Activated CD4-positive, alpha-beta T cell treated with anti-CD3 and anti-CD28 coated beads for 36 hours (primary cell): ENCODE measurements at regions of chr19 and their contacts with region 1.

Region 1: DNA sequence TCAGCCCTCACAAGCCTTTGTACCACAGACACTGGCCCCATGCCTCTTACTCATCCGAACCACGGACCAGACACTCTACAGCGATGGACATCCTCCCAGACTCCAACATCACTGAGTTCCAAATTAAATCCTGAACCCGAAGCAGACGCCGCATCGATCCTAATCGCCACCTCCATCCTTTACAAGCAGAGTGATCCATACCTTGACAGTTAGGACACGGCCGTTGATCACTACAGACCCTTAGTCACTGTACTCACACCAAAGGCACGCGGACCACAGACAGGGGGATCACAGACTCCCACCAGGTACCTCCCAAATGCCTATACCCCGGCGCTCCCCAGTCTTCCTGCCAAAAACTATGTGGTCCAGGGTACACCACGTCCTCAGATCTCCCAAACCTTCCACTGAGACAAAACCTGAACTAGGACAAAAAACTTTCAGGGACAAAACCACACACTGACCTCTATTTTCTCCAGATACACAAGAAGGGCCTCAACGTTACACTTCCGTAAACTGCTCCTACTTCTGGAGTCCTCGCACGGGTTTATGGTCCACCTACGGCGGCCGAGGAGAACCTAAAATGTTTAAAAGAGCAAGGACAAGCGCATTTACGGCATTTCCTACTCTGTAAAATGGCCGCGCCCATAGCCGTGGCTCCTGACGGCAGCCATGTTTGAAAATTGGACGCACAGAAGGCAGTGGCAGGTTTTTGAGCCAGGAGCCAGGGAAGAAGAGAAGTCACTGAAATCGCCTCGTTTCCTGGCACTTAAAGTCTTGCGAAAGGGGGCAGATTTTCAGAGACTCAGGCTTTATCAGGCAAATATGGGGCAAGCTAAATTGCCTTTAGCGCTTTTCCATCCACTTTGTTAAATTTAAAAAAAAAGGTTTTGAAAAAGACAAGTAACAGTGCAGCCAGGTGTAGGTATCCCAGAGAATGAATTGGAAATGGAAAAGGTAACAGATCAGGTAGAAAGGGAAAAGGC is at the start of gene ZNF350:
- DNase-seq: peak; percentile 94
- ATAC-seq: peak; percentile 99
- H3K4me3 Mint-ChIP-seq: peak within 1 kb of the TSS; percentile 85
- H3K27ac Mint-ChIP-seq: peak within 1 kb of the TSS; percentile 95
- H3K4me1 Mint-ChIP-seq: peaks cover 8% of the 10 kb centered on the region
- H3K27me3 Mint-ChIP-seq: no peaks in the 10 kb centered on the region
- total RNA-seq, gene ZNF350: 7.1 to 7.9 TPM

Region 2: DNA sequence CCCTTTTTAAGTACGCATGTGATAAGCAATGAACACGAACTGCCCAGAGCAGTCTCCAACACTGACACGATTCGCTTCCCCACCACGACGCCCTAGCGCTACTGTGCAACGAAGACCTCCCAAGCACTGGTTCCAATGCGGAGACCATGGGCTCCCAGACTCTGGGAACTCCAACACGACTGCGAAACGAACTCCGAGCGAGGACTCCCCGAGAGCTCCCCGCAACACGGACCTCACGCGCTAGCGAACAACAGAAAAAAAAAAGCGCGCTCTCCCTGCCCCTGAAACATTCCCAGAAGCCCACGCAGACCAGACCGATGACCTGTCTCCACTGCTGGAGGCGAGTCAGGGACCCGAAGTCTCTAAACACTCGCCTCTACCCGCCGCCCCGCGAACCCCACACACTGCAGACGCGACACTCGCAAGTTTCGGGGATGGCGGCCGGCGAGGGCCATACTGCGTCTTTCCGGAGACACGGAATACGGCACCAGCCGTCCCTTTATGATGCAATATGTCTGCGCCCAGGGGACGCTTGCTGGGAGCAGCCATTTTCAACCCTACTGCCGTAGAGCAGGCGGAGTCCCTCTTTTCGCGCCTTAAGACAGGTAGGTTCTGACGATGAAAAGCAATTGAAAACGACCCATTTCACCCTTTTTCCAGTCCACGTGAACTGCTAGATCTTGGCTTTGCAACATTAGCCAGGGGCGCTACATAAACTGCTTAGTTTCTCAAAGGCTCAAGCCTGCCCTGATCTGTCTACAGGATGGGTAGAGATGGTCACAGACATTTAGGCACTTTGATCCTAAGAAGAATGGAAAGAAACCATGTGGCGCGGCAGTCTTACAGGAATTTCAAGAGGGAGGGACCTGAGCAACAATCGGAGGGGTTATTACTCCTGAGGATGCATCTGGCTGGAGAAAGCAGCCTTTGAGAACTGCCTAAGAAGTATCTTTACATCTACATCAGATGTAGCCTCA is 98.8 kb before region 1 on chr19 and contains the start of gene ZNF577:
- CTCF ChIA-PET with region 1: no interaction called
- POLR2A ChIA-PET with region 1: no interaction called
- intact Hi-C with region 1: loop called in 1 of 2 experiments (anchors 1 kb)
- DNase-seq: peak; percentile 89
- ATAC-seq: peak; percentile 88
- H3K4me3 Mint-ChIP-seq: peak within 1 kb of the TSS; percentile 95
- H3K27ac Mint-ChIP-seq: peak within 1 kb of the TSS; percentile 92
- H3K4me1 Mint-ChIP-seq: peaks cover 12% of the 10 kb centered on the region
- H3K27me3 Mint-ChIP-seq: no peaks in the 10 kb centered on the region
- total RNA-seq, gene ZNF577: 5.7 to 7.2 TPM

Region 3: DNA sequence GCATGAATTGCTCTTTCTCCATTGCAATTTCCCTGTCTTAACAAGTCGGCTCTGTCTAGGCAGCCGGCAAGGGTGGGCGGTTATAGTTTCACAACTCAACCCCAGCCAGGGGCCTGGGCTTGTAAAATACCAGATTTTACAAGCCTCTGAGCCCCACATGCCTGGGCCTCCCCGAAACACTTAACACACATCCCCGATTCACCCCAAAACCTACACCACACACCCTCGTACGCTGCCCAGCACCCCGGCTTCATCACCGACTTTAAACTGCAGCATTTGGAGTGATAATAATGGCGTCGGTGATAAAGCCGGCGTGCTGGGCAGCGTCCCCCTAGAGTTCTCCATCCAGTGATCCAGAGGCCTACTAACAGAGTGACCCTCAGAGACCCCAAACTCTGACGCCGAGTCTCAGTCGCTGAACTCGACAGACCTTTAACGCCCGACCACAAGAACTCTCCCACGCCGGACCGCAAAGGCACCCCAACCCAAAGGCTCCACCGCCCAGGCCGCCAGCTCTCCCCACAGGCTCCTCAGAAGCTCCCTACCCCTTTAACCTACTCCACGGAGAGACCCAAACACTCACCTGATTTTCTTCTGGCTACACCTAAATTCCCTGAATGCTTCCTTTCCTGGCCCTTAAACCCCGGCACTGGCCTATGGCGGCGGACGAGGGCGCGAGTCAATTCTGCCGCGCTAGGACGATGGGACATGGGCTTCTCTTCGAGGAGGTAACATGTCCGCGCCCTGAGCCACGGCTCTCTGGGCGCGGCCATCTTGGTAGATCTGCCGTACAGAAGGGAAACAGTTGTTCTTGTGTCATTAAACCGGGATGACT is 82.1 kb before region 1 on chr19 and contains the start of gene ZNF649:
- CTCF ChIA-PET with region 1: no interaction called
- POLR2A ChIA-PET with region 1: no interaction called
- intact Hi-C with region 1: loop called in 1 of 2 experiments (anchors 1 kb)
- DNase-seq: peak; percentile 89
- ATAC-seq: peak; percentile 92
- H3K4me3 Mint-ChIP-seq: peak within 1 kb of the TSS; percentile 91
- H3K27ac Mint-ChIP-seq: peak within 1 kb of the TSS; percentile 99
- H3K4me1 Mint-ChIP-seq: peaks cover 22% of the 10 kb centered on the region
- H3K27me3 Mint-ChIP-seq: peaks cover 18% of the 10 kb centered on the region
- total RNA-seq, gene ZNF649: 9.6 to 11.2 TPM

Region 4: GRCh38 chr19:52028027-52028779 is 41.6 kb after region 1 on chr19 and contains the start of gene ZNF614:
- CTCF ChIA-PET with region 1: no interaction called
- POLR2A ChIA-PET with region 1: no interaction called
- intact Hi-C with region 1: loop called in 1 of 2 experiments (anchors 1 kb)
- DNase-seq: peak; percentile 93
- ATAC-seq: peak; percentile 94
- H3K4me3 Mint-ChIP-seq: peak within 1 kb of the TSS; percentile 81
- H3K27ac Mint-ChIP-seq: peak within 1 kb of the TSS; percentile 88
- H3K4me1 Mint-ChIP-seq: peaks cover 13% of the 10 kb centered on the region
- H3K27me3 Mint-ChIP-seq: no peaks in the 10 kb centered on the region
- total RNA-seq, gene ZNF614: 9.4 to 10.6 TPM

Region 5: DNA sequence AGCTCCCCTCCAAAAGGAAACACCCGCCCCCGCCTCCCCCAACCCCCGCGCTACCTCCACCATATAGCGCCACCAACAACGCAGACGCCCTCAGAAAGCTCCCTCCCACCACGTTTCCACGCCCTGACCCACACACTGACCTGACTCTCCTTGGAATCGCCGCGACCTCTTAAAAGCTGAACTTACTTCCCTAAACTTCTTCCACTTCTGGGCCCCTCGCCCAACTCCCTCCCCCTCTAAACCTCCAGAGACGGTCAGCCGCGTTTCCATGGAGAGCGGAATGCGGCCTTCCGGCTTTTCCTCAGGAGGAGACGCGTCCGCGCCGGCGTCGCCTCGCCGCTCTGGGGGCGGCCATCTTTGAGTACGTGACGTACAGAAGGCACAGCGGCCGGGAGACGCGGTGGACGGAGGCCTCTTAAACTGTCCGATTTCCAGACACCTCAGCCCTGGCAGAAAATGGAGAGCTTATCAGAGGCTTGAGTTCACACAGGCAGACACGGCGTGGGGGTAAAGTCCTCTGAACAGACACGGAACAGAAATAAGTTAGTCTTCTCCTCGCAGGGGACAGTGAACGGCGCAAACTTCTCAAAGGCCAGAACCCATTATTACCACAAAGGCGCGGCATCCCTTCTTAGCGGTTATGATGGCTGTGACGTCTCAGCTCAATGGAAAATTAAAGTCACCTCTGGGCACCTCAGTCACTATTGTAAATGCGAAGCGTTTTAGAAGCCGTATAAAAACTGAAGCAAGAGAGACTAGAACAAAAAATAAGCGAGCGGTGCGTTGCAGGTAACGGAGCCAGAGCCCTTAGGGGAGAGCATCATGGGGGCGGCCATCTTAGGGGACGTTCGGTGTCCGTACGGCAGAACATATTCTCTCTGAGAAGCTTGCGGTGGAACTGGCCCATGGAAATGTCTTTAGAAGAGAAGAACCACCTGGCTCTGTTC is 62.2 kb after region 1 on chr19 and contains the start of gene ZNF432:
- CTCF ChIA-PET with region 1: no interaction called
- POLR2A ChIA-PET with region 1: no interaction called
- intact Hi-C with region 1: loop called in 1 of 2 experiments (anchors 2 kb)
- DNase-seq: peak; percentile 88
- ATAC-seq: peak; percentile 88
- H3K4me3 Mint-ChIP-seq: peak within 1 kb of the TSS; percentile 94
- H3K27ac Mint-ChIP-seq: peak within 1 kb of the TSS; percentile 100
- H3K4me1 Mint-ChIP-seq: peaks cover 16% of the 10 kb centered on the region
- H3K27me3 Mint-ChIP-seq: no peaks in the 10 kb centered on the region
- total RNA-seq, gene ZNF432: 11.5 to 12.8 TPM

Region 6: GRCh38 chr19:52065399-52065798 is 78.8 kb after region 1 on chr19:
- CTCF ChIA-PET with region 1: no interaction called
- POLR2A ChIA-PET with region 1: no interaction called
- intact Hi-C with region 1: no loop called
- DNase-seq: no peak
- ATAC-seq: no peak
- H3K4me3 Mint-ChIP-seq: no peak overlapping the region
- H3K27ac Mint-ChIP-seq: no peak overlapping the region
- H3K4me1 Mint-ChIP-seq: no peaks in the 10 kb centered on the region
- H3K27me3 Mint-ChIP-seq: no peaks in the 10 kb centered on the region